A549 (cell line): ENCODE measurements at regions of chr7 and their contacts with region 1.

Region 1: GRCh38 chr7:143305423-143306070 is 10.4 kb upstream of the CLCN1 start:
- DNase-seq: peak; percentile 69 to 78
- ATAC-seq: peak; percentile 93 to 98
- H3K4me3 ChIP-seq: no peak overlapping the region
- H3K27ac ChIP-seq: no peak overlapping the region
- H3K4me1 ChIP-seq: no peaks in the 10 kb centered on the region
- CTCF ChIP-seq: peak; percentile 72
- EP300 ChIP-seq: no peak
- POLR2A ChIP-seq: no peak
- RAD21 ChIP-seq: peak; percentile 66 to 72

Region 2: GRCh38 chr7:143287935-143288826 is 17.4 kb before region 1 on chr7 and contains the start of gene CASP2:
- CTCF ChIA-PET with region 1: interaction called, 11 read pairs
- POLR2A ChIA-PET with region 1: interaction called, 3 read pairs
- DNase-seq: peak; percentile 98
- ATAC-seq: peak; percentile 91 to 94
- H3K4me3 ChIP-seq: peak within 1 kb of the TSS; percentile 91
- H3K27ac ChIP-seq: peak within 1 kb of the TSS; percentile 96 to 99
- H3K4me1 ChIP-seq: peaks cover 34% of the 10 kb centered on the region
- CTCF ChIP-seq: 0 out of 3 replicates have a peak, but pooled peaks have one; percentile 8
- EP300 ChIP-seq: no peak
- POLR2A ChIP-seq: peak; percentile 75
- RAD21 ChIP-seq: no peak
- polyA plus RNA-seq, gene CASP2: 24.6 and 26.0 TPM in 2 replicates

Region 3: GRCh38 chr7:143316492-143316891 is 10.9 kb after region 1 on chr7:
- CTCF ChIA-PET with region 1: interaction called, 17 read pairs
- POLR2A ChIA-PET with region 1: no interaction called
- DNase-seq: no peak
- ATAC-seq: peak in 1 of 2 experiments; percentile 22; a peak in 3 of 6 replicates
- H3K4me3 ChIP-seq: no peak overlapping the region
- H3K27ac ChIP-seq: no peak overlapping the region
- H3K4me1 ChIP-seq: peaks cover 15% of the 10 kb centered on the region
- CTCF ChIP-seq: no peak
- EP300 ChIP-seq: no peak
- POLR2A ChIP-seq: no peak
- RAD21 ChIP-seq: no peak

Region 4: GRCh38 chr7:143345428-143345900 is 39.9 kb after region 1 on chr7:
- CTCF ChIA-PET with region 1: interaction called, 10 read pairs
- POLR2A ChIA-PET with region 1: no interaction called
- DNase-seq: peak; percentile 78 to 82
- ATAC-seq: peak; percentile 99 to 100
- H3K4me3 ChIP-seq: peak overlapping the region; percentile 19; the same call in 2 of the 3 replicates
- H3K27ac ChIP-seq: peak overlapping the region; percentile 44 to 63; a peak in 5 of 6 replicates
- H3K4me1 ChIP-seq: no peaks in the 10 kb centered on the region
- CTCF ChIP-seq: peak; percentile 64
- EP300 ChIP-seq: no peak
- POLR2A ChIP-seq: no peak; the same call in 1 of the 2 replicates
- RAD21 ChIP-seq: peak; percentile 36 to 53